ENCODE measurements at regions of chr22 and their contacts with region 1.

Region 1: DNA sequence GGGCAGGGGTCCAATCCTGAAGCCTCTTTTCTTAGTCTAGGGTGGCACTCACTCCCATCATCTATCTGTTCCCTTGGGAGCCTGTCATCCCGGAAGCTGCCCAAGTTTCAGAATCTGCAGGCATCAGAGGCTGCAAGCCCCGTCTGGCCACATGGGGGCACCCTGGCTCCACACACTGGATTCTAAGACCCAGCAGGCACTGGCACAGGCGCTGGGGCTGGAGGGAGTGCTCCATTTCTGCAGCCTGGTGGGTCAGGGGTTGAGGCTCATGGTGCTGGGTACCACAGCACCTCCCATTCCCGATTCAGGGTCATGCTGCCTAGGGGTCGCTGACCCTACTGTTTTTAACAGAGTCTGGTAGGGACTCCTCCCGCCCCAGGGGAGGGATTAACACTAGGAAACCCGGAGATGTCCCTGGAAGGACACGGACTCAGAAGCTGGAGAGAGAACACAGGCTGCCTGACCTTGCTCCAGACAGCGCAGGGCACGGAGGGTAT is 243.9 kb upstream of the SYN3 start:
- DNase-seq: peak; percentile 75 to 93 (median 91)
- ATAC-seq: peak; percentile 96
- H3K4me3 ChIP-seq: no peak overlapping the region
- H3K4me1 ChIP-seq: no peaks in the 10 kb centered on the region
- CTCF ChIP-seq: peak; percentile 89

Region 2: GRCh38 chr22:32800994-32801942 is 500.8 kb before region 1 on chr22 and contains the start of gene TIMP3:
- intact Hi-C with region 1: no loop called
- DNase-seq: peak; percentile 65 to 78 (median 71)
- ATAC-seq: peak; percentile 71
- H3K4me3 ChIP-seq: peak within 1 kb of the TSS; percentile 24
- H3K4me1 ChIP-seq: peaks cover 10% of the 10 kb centered on the region
- CTCF ChIP-seq: no peak
- total RNA-seq, gene TIMP3: 14.4 to 193 (median 49.1) TPM

Region 3: GRCh38 chr22:33579448-33580093 is 277.5 kb after region 1 on chr22:
- intact Hi-C with region 1: loop called in 1 of 2 experiments (anchors 2 kb)
- DNase-seq: peak; percentile 48 to 88 (median 52)
- ATAC-seq: peak; percentile 93
- H3K4me3 ChIP-seq: no peak overlapping the region
- H3K4me1 ChIP-seq: no peaks in the 10 kb centered on the region
- CTCF ChIP-seq: peak; percentile 79

Region 4: DNA sequence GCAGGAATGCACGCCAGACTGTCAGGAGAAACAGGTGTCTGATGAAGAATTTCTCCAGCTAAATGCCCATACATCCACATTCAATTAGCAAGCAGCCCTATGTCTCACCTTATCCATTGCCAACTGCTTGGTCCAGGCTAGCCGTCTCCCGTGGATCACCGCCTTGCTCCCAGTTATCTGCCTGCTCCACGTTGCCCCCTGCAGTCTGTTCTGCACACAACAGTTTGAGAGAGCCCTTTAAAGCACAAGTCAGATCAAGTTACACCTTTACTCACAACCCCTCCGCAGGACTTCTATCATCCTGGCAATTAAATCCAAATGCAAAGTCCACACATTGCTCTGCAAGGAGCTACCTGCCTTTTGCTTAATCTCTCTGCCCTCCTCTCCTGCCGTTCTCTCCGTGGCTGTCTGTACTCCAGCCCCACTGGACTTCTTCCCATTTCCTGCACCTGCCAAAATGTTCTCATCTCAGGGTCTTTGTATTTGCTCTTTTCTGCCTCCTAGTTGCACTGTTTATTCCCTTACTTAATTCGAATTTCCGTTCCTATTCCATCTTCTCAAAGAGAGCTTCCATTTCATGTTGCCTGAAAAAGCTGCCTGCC is 803.5 kb after region 1 on chr22:
- intact Hi-C with region 1: loop called in 1 of 2 experiments (anchors 10 kb)
- DNase-seq: peak in 2 of 3 donors; percentile 71 to 78
- ATAC-seq: peak; percentile 79
- H3K4me3 ChIP-seq: no peak overlapping the region
- H3K4me1 ChIP-seq: no peaks in the 10 kb centered on the region
- CTCF ChIP-seq: peak; percentile 26